ENCODE measurements at regions of chr16 and their contacts with region 1.

Region 1: GRCh38 chr16:74635303-74635702 is 28.4 kb upstream of the GLG1 start:
- DNase-seq: no peak
- H3K4me3 ChIP-seq: no peak overlapping the region
- H3K4me3 Mint-ChIP-seq: no peak overlapping the region
- H3K27ac ChIP-seq: no peak overlapping the region
- H3K27ac Mint-ChIP-seq: peak overlapping the region in 2 of 7 donors; percentile 23 to 68
- H3K4me1 ChIP-seq: no peaks in the 10 kb centered on the region
- H3K4me1 Mint-ChIP-seq: no peaks in the 10 kb centered on the region
- H3K27me3 ChIP-seq: no peaks in the 10 kb centered on the region
- H3K27me3 Mint-ChIP-seq: no peaks in the 10 kb centered on the region

Region 2: GRCh38 chr16:74650966-74651567 is 15.8 kb after region 1 on chr16:
- CTCF ChIA-PET with region 1: interaction called, 19 read pairs
- POLR2A ChIA-PET with region 1: no interaction called
- intact Hi-C with region 1: no loop called
- DNase-seq: peak in 2 of 5 donors; percentile 4 to 8
- H3K4me3 ChIP-seq: no peak overlapping the region
- H3K4me3 Mint-ChIP-seq: no peak overlapping the region
- H3K27ac ChIP-seq: no peak overlapping the region
- H3K27ac Mint-ChIP-seq: peak overlapping the region in 1 of 7 donors; percentile 65
- H3K4me1 ChIP-seq: peaks cover 18% of the 10 kb centered on the region
- H3K4me1 Mint-ChIP-seq: peaks cover 24 to 37% (median 30%) of the 10 kb centered on the region in 4 donors
- H3K27me3 ChIP-seq: no peaks in the 10 kb centered on the region
- H3K27me3 Mint-ChIP-seq: no peaks in the 10 kb centered on the region